ENCODE measurements at regions of chr12 and their contacts with region 1.

Region 1: DNA sequence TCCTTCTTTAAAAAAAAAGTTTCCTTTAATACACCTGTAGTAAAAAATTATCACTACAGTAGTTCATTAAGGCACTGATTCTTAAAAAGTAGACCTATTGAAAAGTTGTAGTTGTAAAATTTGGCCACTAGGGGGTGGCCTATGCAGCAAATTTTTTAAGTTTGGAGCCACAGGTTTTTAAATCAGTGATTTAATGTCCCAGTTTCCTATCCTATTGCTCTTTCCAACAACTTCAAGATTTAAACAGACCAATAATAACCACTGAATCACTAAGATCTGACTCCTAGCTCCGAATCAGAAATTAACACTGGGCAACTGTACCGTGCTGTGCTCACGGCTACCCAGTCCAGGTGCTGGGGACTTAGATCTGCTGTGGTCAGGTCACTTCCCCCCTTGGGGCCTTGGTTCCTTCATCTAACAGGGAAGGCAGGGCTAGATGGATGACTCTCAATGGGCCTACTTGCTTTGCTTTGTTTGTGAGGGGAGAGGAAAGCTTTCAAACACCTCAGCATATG is 279.3 kb downstream of the MED13L start:
- DNase-seq: peak; percentile 56
- H3K4me3 Mint-ChIP-seq: no peak overlapping the region
- H3K27ac Mint-ChIP-seq: no peak overlapping the region
- H3K4me1 Mint-ChIP-seq: no peaks in the 10 kb centered on the region
- H3K27me3 Mint-ChIP-seq: no peaks in the 10 kb centered on the region
- CTCF ChIP-seq: peak; percentile 63

Region 2: DNA sequence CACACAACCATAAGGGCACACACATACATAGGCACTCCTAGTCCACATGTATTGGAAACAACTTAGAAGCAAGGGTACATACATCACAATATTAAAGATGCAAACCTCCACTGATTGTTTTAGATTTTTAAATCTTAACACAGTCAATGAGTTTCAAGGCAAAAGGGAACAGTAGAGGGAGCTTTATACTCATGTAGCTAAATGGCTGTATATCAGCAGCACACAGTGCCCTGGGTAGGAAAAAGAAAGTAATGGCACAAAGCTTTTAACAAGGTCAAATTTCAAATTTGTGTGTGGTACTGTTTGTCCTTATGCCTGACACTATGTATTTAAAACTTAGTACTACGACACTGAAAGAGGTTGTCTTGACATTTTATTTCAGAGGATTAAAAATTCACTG is 17.3 kb after region 1 on chr12:
- CTCF ChIA-PET with region 1: interaction called, 13 read pairs
- POLR2A ChIA-PET with region 1: interaction called, 4 read pairs
- intact Hi-C with region 1: no loop called
- DNase-seq: peak; percentile 43
- H3K4me3 Mint-ChIP-seq: no peak overlapping the region
- H3K27ac Mint-ChIP-seq: no peak overlapping the region
- H3K4me1 Mint-ChIP-seq: peaks cover 4% of the 10 kb centered on the region
- H3K27me3 Mint-ChIP-seq: no peaks in the 10 kb centered on the region
- CTCF ChIP-seq: peak; percentile 30

Region 3: GRCh38 chr12:116099652-116100432 is 101.7 kb after region 1 on chr12:
- CTCF ChIA-PET with region 1: no interaction called
- POLR2A ChIA-PET with region 1: no interaction called
- intact Hi-C with region 1: no loop called
- DNase-seq: no peak
- H3K4me3 Mint-ChIP-seq: no peak overlapping the region
- H3K27ac Mint-ChIP-seq: no peak overlapping the region
- H3K4me1 Mint-ChIP-seq: peaks cover 11% of the 10 kb centered on the region
- H3K27me3 Mint-ChIP-seq: no peaks in the 10 kb centered on the region
- CTCF ChIP-seq: no peak

Region 4: DNA sequence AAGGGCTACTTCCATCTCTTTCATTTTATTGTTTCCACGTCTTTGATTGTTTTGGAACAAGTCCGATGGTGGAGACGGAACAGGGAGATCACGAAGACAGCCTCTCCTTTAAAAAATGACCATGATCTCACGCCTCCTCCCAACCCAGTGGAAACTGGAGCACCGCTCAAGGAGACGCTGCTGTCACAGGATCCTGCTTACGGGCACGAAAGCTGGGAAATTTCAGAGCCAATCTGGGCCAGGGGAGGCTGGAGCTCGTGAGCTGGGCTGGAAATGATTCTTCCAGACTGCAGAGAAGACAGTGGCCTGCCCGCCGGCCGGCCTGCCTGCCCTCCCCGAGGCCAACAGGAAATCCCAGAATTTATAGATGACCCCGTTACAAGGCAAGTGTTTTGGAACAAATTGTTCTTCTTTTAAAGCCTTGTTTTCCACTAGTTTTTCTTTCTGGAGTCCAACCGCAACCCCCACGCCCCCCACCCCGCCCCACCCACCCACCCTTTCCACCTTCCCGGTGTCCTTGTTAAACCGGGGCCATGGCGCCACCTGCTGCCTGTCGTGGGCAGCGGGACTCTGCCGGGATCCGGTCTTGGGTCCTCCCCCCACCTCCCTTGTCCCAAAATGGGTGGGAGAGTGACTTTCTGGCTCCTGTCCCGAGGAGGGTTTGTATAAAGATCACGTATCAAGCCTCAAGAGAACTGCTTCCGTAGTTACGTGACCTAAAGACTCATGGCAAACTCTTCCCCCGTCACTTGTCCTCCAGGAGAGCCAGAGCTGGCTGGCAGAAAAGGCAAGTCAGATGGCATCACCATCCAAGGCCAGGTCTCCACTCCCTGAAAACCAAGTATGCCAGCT is 601.3 kb after region 1 on chr12:
- CTCF ChIA-PET with region 1: interaction called, 10 read pairs
- POLR2A ChIA-PET with region 1: no interaction called
- intact Hi-C with region 1: loop called (anchors 10 kb)
- DNase-seq: peak; percentile 57
- H3K4me3 Mint-ChIP-seq: no peak overlapping the region
- H3K27ac Mint-ChIP-seq: no peak overlapping the region
- H3K4me1 Mint-ChIP-seq: no peaks in the 10 kb centered on the region
- H3K27me3 Mint-ChIP-seq: no peaks in the 10 kb centered on the region
- CTCF ChIP-seq: peak; percentile 71

Region 5: DNA sequence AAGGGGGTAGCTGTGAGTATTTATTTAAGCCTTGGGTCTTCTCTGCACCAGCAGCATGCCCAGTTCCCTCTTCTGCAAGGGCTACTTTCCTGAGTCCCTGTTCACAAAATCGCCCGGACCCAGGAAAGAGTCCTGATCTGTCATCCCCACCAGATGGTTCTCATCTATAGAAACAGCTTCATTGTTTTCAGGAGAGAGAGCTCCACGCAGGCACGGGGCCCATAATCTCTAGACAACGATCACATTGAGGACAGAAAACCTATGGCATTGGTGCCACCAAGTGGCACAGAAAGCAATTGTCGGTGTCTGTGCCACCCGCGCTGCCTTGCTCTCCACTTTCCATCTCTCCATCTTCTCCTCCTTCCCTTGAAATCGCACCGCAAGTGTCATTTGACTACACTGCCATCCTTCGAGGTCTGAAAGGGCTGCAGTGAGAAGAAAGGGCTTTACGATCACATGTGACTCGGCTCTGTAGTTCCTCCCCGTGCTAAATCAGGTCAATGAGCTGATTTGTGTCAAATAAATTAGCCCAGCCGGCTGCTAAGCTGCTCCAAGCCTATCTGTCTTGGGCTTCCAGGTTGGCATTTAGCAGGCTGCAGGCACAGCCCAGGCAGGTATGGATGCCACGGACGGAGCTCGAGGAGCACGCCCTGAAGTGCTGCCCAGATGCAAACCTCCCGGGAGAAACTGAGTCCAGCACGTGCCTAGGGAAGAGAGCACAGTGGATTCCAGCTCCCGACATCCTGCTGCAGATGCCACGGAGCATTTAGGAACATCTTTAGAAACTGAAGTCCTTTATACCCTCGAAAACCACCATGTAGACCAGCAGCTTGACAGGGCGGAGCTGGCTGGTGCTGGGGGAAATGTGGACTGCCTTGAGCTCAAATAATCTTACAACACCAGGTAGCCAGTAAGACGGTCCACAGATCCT is 710.9 kb after region 1 on chr12:
- CTCF ChIA-PET with region 1: interaction called, 15 read pairs
- POLR2A ChIA-PET with region 1: no interaction called
- intact Hi-C with region 1: loop called (anchors 5 kb)
- DNase-seq: peak; percentile 61
- H3K4me3 Mint-ChIP-seq: no peak overlapping the region
- H3K27ac Mint-ChIP-seq: no peak overlapping the region
- H3K4me1 Mint-ChIP-seq: peaks cover 9% of the 10 kb centered on the region
- H3K27me3 Mint-ChIP-seq: no peaks in the 10 kb centered on the region
- CTCF ChIP-seq: peak; percentile 71